Common myeloid progenitor, CD34-positive (primary cell): ENCODE measurements at regions of chr15 and their contacts with region 1.

Region 1: GRCh38 chr15:70722266-70723121 is 40.9 kb downstream of the UACA start:
- DNase-seq: peak; percentile 51 to 77 (median 65)
- H3K4me3 ChIP-seq: no peak overlapping the region
- H3K27ac ChIP-seq: no peak overlapping the region
- H3K4me1 ChIP-seq: no peaks in the 10 kb centered on the region
- H3K27me3 ChIP-seq: peaks cover 3 to 30% (median 4%) of the 10 kb centered on the region in 5 experiments

Region 2: GRCh38 chr15:70559265-70560239 is 162.9 kb before region 1 on chr15:
- CTCF ChIA-PET with region 1: no interaction called
- POLR2A ChIA-PET with region 1: no interaction called
- DNase-seq: peak; percentile 81 to 97 (median 95)
- H3K4me3 ChIP-seq: peak overlapping the region in 5 of 7 experiments; percentile 15 to 74 (median 41)
- H3K27ac ChIP-seq: no peak overlapping the region
- H3K4me1 ChIP-seq: peaks cover 9 to 55% (median 41%) of the 10 kb centered on the region in 4 experiments
- H3K27me3 ChIP-seq: no peaks in the 10 kb centered on the region

Region 3: DNA sequence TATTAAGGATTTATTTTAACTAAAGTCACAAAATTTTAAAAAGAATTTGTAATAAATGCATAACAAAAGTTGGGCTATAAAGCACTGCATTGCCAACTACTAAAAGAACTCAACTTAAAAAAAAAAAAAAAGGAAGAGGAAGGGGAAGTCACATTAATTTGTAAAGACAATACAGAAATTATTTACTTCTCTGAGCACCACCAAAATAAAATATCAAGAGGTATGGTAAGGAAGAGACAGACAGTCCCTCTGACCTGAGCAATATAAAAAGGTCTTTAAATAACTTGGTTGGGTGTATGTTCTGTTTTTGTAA is 42.6 kb before region 1 on chr15:
- CTCF ChIA-PET with region 1: interaction called, 21 read pairs
- POLR2A ChIA-PET with region 1: no interaction called
- DNase-seq: no peak
- H3K4me3 ChIP-seq: no peak overlapping the region
- H3K27ac ChIP-seq: no peak overlapping the region
- H3K4me1 ChIP-seq: no peaks in the 10 kb centered on the region
- H3K27me3 ChIP-seq: peaks cover 0 to 57% (median 16%) of the 10 kb centered on the region in 5 experiments